ENCODE measurements at regions of chr19 and their contacts with region 1.

Region 1: DNA sequence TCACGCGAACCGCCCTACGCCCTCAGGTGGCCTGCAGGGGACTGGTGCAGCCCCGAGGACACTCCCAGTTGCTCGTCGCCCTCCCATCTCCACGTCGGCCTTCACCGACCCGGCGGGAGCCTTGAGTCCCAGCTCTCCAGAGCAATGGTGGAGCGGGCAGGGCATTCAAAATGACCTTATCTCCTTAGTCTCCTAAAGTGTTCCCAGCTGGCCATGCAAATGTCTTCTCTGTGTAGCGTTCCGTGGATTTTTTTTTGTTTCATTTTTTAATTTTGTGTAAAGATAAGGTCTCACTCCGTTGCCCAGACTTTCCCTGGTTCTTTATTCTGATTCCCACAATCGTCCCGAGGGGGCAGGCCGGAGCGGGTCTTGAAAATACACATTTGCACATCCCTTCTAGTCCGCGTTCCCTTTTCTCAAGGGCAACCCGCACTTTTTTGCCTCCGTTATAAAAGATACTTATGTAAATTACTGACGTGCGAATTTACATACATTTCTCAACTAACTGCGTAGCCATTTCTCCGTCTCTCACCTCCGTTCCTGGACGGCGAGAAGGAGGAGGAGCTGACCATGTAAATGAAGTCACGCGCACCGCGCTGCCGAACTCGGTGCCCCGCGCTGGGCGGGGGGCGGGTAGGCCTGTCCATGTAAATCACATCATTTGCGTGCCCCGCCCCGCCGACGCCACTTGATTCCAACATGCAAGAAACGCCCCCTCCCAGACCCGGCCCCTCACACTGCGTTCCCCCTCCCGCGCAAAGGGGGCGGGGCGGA is 581 bp upstream of the EGLN2 start:
- DNase-seq: peak; percentile 100
- H3K4me3 ChIP-seq: peak overlapping the region; percentile 25 to 100 (median 74)
- H3K27ac ChIP-seq: peak overlapping the region; percentile 89 to 99 (median 96)
- H3K4me1 ChIP-seq: peaks cover 0 to 45% (median 43%) of the 10 kb centered on the region in 4 donors
- H3K27me3 ChIP-seq: no peaks in the 10 kb centered on the region
- CTCF ChIP-seq: peak; percentile 48 to 80 (median 56)
- EP300 ChIP-seq: peak in 1 of 4 donors; percentile 44
- POLR2A ChIP-seq: peak; percentile 40 to 76

Region 2: GRCh38 chr19:40693150-40693788 is 105.1 kb before region 1 on chr19:
- intact Hi-C with region 1: no loop called
- DNase-seq: no peak
- H3K4me3 ChIP-seq: no peak overlapping the region
- H3K27ac ChIP-seq: no peak overlapping the region
- H3K4me1 ChIP-seq: peaks cover 0 to 33% (median 29%) of the 10 kb centered on the region in 4 donors
- H3K27me3 ChIP-seq: no peaks in the 10 kb centered on the region
- CTCF ChIP-seq: no peak
- EP300 ChIP-seq: no peak
- POLR2A ChIP-seq: no peak

Region 3: GRCh38 chr19:40750059-40750873 is 48.1 kb before region 1 on chr19 and contains the start of gene ACTMAP:
- intact Hi-C with region 1: loop called (anchors 2 kb)
- DNase-seq: peak; percentile 100
- H3K4me3 ChIP-seq: peak within 1 kb of the TSS; percentile 64 to 73 (median 71)
- H3K27ac ChIP-seq: peak within 1 kb of the TSS; percentile 86 to 96 (median 94)
- H3K4me1 ChIP-seq: peaks cover 0 to 57% (median 45%) of the 10 kb centered on the region in 4 donors
- H3K27me3 ChIP-seq: no peaks in the 10 kb centered on the region
- CTCF ChIP-seq: no peak
- EP300 ChIP-seq: peak in 2 of 4 donors; percentile 8 to 78
- POLR2A ChIP-seq: peak; percentile 66 to 81
- total RNA-seq, gene ACTMAP: 1.8 to 5.3 (median 3.0) TPM

Region 4: GRCh38 chr19:40777937-40778705 is 20.3 kb before region 1 on chr19 and contains the start of gene RAB4B:
- intact Hi-C with region 1: loop called (anchors 2 kb)
- DNase-seq: peak; percentile 100
- H3K4me3 ChIP-seq: peak within 1 kb of the TSS; percentile 63 to 80 (median 68)
- H3K27ac ChIP-seq: peak within 1 kb of the TSS; percentile 94 to 99 (median 96)
- H3K4me1 ChIP-seq: peaks cover 0 to 22% (median 14%) of the 10 kb centered on the region in 4 donors
- H3K27me3 ChIP-seq: no peaks in the 10 kb centered on the region
- CTCF ChIP-seq: no peak
- EP300 ChIP-seq: no peak
- POLR2A ChIP-seq: peak; percentile 17 to 87
- total RNA-seq, gene RAB4B: 15.6 to 21.3 (median 19.2) TPM

Measured in sigmoid colon (tissue), 7 donors.